Activated CD8-positive, alpha-beta memory T cell treated with anti-CD3 and anti-CD28 coated beads, Interleukin-2, amount 10 ng/mL, durations not matched to agents 7 days and 5 days (primary cell): ENCODE measurements at regions of chr11 and their contacts with region 1.

Region 1: DNA sequence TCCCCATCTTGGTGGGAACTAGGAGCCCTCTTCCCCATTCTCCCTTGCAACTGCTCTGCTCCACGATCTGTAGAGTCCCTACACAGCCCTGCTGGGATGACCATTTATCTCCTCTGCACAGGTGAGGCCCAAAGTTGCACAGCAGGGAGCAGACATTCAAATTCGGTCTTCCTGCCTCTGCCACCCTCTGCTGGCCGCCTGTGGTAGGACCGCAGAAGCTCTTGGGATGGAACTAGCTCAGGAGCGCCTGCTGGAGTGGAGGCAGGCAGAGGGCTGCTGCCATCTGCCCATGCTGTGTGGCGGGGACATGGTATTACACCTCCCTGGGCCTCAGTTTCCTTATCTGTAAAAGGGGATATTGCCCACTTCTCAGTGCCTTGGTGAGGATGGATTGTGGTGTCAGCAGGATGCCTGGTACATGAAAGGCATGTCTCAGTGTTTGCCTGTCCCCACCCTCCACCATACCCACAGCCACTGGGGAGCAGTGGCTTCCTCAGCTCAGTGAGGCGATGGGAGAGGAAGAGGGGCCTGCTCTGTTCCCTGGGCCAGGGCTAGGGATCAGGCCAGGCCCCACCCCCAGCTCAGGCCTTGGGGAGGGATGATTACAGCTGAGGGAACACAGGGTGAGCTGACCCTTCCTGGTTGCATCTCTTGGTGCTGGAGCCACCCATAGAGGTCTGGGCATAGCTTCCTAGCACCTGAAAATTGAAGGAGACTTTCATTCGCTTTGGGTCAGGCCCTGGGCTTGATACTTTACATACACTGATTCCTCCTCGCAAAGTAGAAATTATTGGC is 11.3 kb upstream of the OMP start:
- DNase-seq: peak; percentile 88
- ATAC-seq: peak; percentile 95
- H3K4me3 Mint-ChIP-seq: no peak overlapping the region
- H3K27ac Mint-ChIP-seq: no peak overlapping the region
- H3K4me1 Mint-ChIP-seq: peaks cover 6% of the 10 kb centered on the region
- H3K27me3 Mint-ChIP-seq: no peaks in the 10 kb centered on the region

Region 2: GRCh38 chr11:76919887-76920746 is 171.2 kb before region 1 on chr11:
- CTCF ChIA-PET with region 1: interaction called, 54 read pairs
- DNase-seq: peak; percentile 75
- ATAC-seq: peak; percentile 82
- H3K4me3 Mint-ChIP-seq: peak overlapping the region; percentile 6
- H3K27ac Mint-ChIP-seq: no peak overlapping the region
- H3K4me1 Mint-ChIP-seq: peaks cover 13% of the 10 kb centered on the region
- H3K27me3 Mint-ChIP-seq: no peaks in the 10 kb centered on the region

Region 3: DNA sequence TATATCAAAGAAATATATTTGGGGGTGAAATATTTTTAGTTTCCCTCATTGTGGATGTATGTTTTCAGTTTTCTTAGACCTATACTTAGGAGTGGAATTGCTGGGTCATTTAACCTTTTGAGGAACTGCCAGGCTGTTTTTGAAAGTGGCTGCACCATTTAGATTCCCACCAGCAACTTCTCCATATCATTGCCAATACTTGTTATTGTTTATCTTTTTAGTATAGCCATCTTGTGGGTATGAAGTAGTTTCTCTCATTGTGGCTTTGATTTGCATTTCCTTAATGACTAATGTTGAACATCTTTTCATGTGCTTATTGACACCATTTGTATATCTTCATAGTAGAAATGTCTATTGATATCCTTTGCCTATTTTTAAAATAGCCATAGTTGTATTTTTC is 119.3 kb before region 1 on chr11:
- CTCF ChIA-PET with region 1: no interaction called
- DNase-seq: no peak
- ATAC-seq: no peak
- H3K4me3 Mint-ChIP-seq: no peak overlapping the region
- H3K27ac Mint-ChIP-seq: no peak overlapping the region
- H3K4me1 Mint-ChIP-seq: no peaks in the 10 kb centered on the region
- H3K27me3 Mint-ChIP-seq: no peaks in the 10 kb centered on the region

Region 4: DNA sequence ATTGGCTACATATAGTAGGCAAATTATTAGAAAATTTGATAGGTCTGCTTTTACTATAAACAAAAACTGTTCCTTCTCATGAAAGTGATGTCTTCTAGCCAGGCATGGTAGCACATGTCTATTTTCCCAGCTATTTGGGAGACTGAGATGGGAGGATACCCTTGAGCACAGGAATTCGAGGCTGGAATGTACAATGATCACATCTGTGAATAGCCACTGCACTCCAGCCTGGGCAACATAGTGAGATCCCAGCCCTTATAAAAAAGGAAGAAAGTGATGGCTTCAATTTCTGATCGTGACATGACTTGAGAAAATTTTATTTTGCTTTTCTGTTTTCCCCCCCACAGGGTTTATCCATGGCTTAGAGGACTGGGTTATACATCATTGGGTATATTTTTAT is 76.7 kb before region 1 on chr11:
- CTCF ChIA-PET with region 1: no interaction called
- DNase-seq: no peak
- ATAC-seq: no peak
- H3K4me3 Mint-ChIP-seq: no peak overlapping the region
- H3K27ac Mint-ChIP-seq: no peak overlapping the region
- H3K4me1 Mint-ChIP-seq: peaks cover 7% of the 10 kb centered on the region
- H3K27me3 Mint-ChIP-seq: no peaks in the 10 kb centered on the region

Region 5: DNA sequence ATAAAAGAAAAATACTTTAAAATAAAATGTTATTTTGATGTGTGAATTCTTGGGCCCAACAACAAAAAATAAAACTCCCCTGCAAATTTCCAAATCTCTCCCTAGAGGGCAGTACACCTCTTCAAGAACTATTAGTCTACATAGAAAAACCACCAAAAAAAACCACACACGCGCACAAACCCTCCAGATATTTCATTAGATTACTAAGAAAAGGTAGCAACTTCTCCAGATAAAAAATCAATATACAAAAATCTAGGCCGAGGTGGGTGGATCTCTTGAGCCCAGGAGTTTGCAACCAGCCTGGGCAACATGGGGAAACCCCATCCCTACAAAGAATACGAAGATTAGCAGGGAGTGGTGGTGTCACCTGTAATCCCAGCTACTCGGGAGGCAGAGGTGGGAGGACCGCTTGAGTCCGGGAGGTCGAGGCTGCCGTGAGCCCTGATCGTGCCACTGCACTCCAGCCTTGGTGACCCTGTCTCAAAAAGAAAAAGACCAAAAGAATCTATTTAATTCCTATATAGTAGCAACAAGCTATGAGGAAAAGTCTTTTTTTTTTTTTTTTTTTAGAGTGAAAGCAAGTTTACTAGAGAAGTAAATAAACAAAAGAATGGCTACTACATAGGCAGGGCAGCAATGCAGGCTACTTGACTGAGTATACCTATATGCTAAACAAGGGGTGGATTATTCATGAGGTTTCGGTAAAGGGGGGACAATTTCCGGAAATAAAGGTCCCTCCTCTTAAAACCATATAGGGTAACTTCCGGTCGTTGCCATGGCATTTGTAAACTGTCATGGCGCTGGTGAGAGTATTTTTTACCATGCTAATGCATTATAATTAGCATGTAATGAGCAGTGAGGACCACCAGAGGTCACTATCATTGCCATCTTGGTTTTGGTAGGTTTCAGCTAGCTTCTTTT is 44.1 kb before region 1 on chr11:
- CTCF ChIA-PET with region 1: interaction called, 118 read pairs
- DNase-seq: peak; percentile 88
- ATAC-seq: peak; percentile 91
- H3K4me3 Mint-ChIP-seq: peak overlapping the region; percentile 64
- H3K27ac Mint-ChIP-seq: peak overlapping the region; percentile 3
- H3K4me1 Mint-ChIP-seq: peaks cover 10% of the 10 kb centered on the region
- H3K27me3 Mint-ChIP-seq: peaks cover 27% of the 10 kb centered on the region

Region 6: GRCh38 chr11:77066229-77067042 is 24.9 kb before region 1 on chr11 and contains the start of gene CAPN5:
- CTCF ChIA-PET with region 1: interaction called, 18 read pairs
- DNase-seq: peak; percentile 86
- ATAC-seq: peak; percentile 96
- H3K4me3 Mint-ChIP-seq: peak within 1 kb of the TSS; percentile 67
- H3K27ac Mint-ChIP-seq: no peak within 1 kb of the TSS
- H3K4me1 Mint-ChIP-seq: peaks cover 2% of the 10 kb centered on the region
- H3K27me3 Mint-ChIP-seq: peaks cover 32% of the 10 kb centered on the region
- total RNA-seq, gene CAPN5: 0.20 to 0.28 TPM

Region 7: DNA sequence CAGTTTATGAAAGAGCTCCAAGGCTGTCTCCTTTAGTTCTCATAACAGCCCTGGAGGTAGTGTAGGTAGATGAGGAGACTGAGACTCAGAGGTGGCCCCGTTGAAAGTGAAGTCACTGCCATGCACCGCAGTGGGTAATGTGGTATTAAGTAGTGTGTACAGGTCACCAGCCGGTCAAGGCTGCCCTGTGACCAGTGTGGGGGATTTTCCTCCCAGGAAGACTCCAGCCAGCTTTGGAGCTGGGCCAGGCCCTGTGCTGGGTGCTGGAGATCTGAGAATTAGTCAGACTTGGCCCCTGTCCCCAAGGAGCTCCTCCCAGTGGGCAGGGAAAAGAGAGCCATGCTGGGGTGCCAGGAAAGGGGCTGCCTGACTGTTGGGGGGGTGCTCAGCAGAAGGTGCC is 16.6 kb after region 1 on chr11:
- CTCF ChIA-PET with region 1: interaction called, 14 read pairs
- DNase-seq: no peak
- ATAC-seq: no peak
- H3K4me3 Mint-ChIP-seq: no peak overlapping the region
- H3K27ac Mint-ChIP-seq: no peak overlapping the region
- H3K4me1 Mint-ChIP-seq: no peaks in the 10 kb centered on the region
- H3K27me3 Mint-ChIP-seq: peaks cover 3% of the 10 kb centered on the region

Region 8: DNA sequence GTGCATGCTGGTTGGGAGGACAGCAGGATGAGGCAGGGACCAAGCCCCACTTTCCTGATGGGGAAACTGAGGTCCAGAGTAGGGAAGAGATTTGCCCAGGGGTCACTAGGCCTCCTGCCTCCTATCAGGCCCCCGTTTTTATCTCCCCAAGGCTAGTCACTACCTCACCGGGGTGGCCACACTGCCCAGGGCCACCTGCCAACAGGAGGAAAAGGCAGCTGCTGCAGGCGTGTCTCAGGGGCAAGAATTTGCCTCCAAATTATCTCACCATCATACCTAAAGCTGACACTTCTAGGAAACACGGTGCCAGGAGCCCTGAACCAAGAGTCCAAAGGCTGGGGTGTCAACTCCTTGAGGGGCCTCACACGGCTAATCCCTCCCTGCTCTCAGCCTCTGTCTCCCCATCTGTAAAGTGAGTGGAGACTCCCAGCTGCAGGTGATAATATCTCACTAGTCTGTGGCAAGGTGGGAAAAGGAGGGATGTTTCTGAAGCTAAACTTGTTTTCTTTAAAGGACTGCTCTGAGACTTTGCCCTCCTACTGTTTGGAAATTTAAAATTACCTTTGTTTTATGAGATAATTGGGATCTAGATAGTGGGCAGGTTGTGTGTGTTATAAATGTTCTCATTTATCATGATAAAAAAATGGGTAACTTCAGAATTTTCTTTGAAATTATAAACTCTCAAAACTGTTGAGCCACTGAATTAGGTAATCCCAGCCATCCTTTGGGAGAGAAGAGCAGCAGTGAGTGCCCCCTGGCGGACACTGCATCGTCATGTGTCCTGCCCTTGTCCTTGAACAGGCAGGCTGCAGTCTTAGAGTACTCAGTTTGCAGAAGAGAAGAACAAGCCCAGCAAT is 96.7 kb after region 1 on chr11:
- CTCF ChIA-PET with region 1: interaction called, 12 read pairs
- DNase-seq: peak; percentile 83
- ATAC-seq: peak; percentile 84
- H3K4me3 Mint-ChIP-seq: no peak overlapping the region
- H3K27ac Mint-ChIP-seq: no peak overlapping the region
- H3K4me1 Mint-ChIP-seq: peaks cover 9% of the 10 kb centered on the region
- H3K27me3 Mint-ChIP-seq: peaks cover 4% of the 10 kb centered on the region

Region 9: GRCh38 chr11:77602381-77603088 is 511.2 kb after region 1 on chr11:
- CTCF ChIA-PET with region 1: no interaction called
- DNase-seq: no peak
- ATAC-seq: no peak
- H3K4me3 Mint-ChIP-seq: no peak overlapping the region
- H3K27ac Mint-ChIP-seq: no peak overlapping the region
- H3K4me1 Mint-ChIP-seq: no peaks in the 10 kb centered on the region
- H3K27me3 Mint-ChIP-seq: no peaks in the 10 kb centered on the region